AG04450 (cell line): ENCODE measurements at regions of chr15 and their contacts with region 1.

Region 1: DNA sequence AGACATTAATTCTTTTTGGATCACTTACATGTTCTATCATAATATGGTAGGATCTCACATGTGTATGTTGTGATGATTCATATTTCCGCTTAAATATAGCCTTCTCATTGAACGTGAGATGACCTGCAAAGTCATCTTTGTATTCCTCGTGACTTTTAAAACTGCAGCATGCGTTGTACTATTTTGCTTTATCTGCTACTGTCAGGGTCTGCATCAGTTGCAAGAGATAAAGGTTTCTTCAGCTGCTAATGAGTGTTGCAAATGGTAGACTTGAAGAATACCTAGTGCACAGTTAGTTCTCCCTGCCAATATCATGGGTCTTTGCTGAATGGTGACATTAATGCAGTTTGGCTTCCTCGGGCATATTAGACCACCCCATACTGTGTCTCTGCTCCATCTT is 31.8 kb downstream of the REC114 start:
- DNase-seq: no peak
- H3K4me3 ChIP-seq: no peak overlapping the region
- H3K27ac ChIP-seq: no peak overlapping the region
- H3K27me3 ChIP-seq: no peaks in the 10 kb centered on the region
- CTCF ChIP-seq: no peak

Region 2: GRCh38 chr15:73426323-73426994 is 48.3 kb before region 1 on chr15:
- CTCF ChIA-PET with region 1: no interaction called
- POLR2A ChIA-PET with region 1: no interaction called
- DNase-seq: no peak
- H3K4me3 ChIP-seq: no peak overlapping the region
- H3K27ac ChIP-seq: no peak overlapping the region
- H3K27me3 ChIP-seq: peaks cover 6% of the 10 kb centered on the region
- CTCF ChIP-seq: no peak

Region 3: GRCh38 chr15:73457334-73457733 is 17.5 kb before region 1 on chr15:
- CTCF ChIA-PET with region 1: no interaction called
- POLR2A ChIA-PET with region 1: interaction called, 12 read pairs
- DNase-seq: no peak
- H3K4me3 ChIP-seq: no peak overlapping the region
- H3K27ac ChIP-seq: no peak overlapping the region
- H3K27me3 ChIP-seq: no peaks in the 10 kb centered on the region
- CTCF ChIP-seq: no peak